ENCODE measurements at regions of chr19 and their contacts with region 1.

Region 1: DNA sequence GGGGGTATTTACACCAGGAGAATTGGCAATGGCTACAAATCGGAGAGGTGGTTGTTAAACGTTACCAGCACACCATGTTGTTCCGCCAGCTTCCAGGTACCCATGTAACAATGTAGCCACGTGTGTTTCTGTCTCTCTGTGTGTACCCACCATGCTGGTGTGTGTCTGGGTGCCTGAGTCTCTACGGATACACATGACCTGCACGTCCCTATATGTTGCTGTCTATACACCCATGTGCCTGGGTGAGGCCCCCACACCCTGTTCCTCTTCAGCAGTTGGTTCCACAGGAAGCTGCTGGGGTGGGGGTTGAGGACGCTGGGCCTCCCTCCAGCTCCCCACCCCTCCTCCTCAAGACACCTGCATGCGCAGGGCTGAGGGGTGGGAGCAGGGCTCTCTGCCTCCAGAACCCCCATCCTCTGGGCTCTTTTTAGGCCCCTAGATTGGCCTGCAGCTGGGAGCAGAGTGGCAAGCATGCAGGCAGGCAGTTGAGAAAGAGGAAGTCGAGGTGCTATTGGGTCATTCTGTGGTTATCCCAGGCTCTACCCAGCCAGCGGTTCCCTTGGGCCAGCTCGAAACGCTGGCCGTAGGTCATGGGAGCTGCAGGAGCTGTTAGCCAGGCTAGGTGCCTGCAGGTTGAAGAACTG is at the start of gene ARHGEF18:
- DNase-seq: peak; percentile 42 to 85 (median 66)
- ATAC-seq: peak; percentile 70 to 80 (median 74)
- H3K4me3 ChIP-seq: peak within 1 kb of the TSS; percentile 66 to 96
- H3K4me3 Mint-ChIP-seq: peak within 1 kb of the TSS; percentile 99 to 100 (median 99)
- H3K27ac ChIP-seq: peak within 1 kb of the TSS; percentile 60
- H3K27ac Mint-ChIP-seq: peak within 1 kb of the TSS; percentile 99
- H3K4me1 ChIP-seq: peaks cover 20 to 70% of the 10 kb centered on the region in 2 experiments
- H3K4me1 Mint-ChIP-seq: peaks cover 62 to 82% (median 77%) of the 10 kb centered on the region in 3 donors
- H3K27me3 ChIP-seq: no peaks in the 10 kb centered on the region
- H3K27me3 Mint-ChIP-seq: no peaks in the 10 kb centered on the region
- total RNA-seq, gene ARHGEF18: 111 to 145 (median 126) TPM

Region 2: GRCh38 chr19:7138402-7138801 is 210.3 kb before region 1 on chr19:
- CTCF ChIA-PET with region 1: no interaction called
- POLR2A ChIA-PET with region 1: interaction called in 1 of 2 experiments, 11 read pairs
- DNase-seq: no peak
- ATAC-seq: no peak
- H3K4me3 ChIP-seq: no peak overlapping the region
- H3K4me3 Mint-ChIP-seq: no peak overlapping the region
- H3K27ac ChIP-seq: no peak overlapping the region
- H3K27ac Mint-ChIP-seq: no peak overlapping the region
- H3K4me1 ChIP-seq: no peaks in the 10 kb centered on the region
- H3K4me1 Mint-ChIP-seq: no peaks in the 10 kb centered on the region
- H3K27me3 ChIP-seq: peaks cover 0 to 5% of the 10 kb centered on the region in 2 experiments
- H3K27me3 Mint-ChIP-seq: peaks cover 0 to under 1% of the 10 kb centered on the region in 2 donors

Measured in T-cell (primary cell).